ENCODE measurements at regions of chr16 and their contacts with region 1.

Region 1: GRCh38 chr16:66608241-66609138 is 4.0 kb downstream of the CMTM3 start:
- DNase-seq: peak; percentile 80
- H3K4me3 ChIP-seq: no peak overlapping the region
- H3K27ac ChIP-seq: no peak overlapping the region
- H3K4me1 ChIP-seq: peaks cover 29% of the 10 kb centered on the region
- H3K27me3 ChIP-seq: no peaks in the 10 kb centered on the region
- CTCF ChIP-seq: peak; percentile 85 to 98

Region 2: GRCh38 chr16:66650707-66651473 is 42.4 kb after region 1 on chr16:
- CTCF ChIA-PET with region 1: interaction called, 10 read pairs
- dilution Hi-C with region 1: no loop called
- in situ Hi-C with region 1: no loop called
- intact Hi-C with region 1: loop called (anchors 1 kb)
- DNase-seq: peak; percentile 86
- H3K4me3 ChIP-seq: peak overlapping the region in 1 of 3 experiments; percentile 18
- H3K27ac ChIP-seq: peak overlapping the region; percentile 59
- H3K4me1 ChIP-seq: peaks cover 24% of the 10 kb centered on the region
- H3K27me3 ChIP-seq: no peaks in the 10 kb centered on the region
- CTCF ChIP-seq: peak; percentile 93 to 99

Region 3: DNA sequence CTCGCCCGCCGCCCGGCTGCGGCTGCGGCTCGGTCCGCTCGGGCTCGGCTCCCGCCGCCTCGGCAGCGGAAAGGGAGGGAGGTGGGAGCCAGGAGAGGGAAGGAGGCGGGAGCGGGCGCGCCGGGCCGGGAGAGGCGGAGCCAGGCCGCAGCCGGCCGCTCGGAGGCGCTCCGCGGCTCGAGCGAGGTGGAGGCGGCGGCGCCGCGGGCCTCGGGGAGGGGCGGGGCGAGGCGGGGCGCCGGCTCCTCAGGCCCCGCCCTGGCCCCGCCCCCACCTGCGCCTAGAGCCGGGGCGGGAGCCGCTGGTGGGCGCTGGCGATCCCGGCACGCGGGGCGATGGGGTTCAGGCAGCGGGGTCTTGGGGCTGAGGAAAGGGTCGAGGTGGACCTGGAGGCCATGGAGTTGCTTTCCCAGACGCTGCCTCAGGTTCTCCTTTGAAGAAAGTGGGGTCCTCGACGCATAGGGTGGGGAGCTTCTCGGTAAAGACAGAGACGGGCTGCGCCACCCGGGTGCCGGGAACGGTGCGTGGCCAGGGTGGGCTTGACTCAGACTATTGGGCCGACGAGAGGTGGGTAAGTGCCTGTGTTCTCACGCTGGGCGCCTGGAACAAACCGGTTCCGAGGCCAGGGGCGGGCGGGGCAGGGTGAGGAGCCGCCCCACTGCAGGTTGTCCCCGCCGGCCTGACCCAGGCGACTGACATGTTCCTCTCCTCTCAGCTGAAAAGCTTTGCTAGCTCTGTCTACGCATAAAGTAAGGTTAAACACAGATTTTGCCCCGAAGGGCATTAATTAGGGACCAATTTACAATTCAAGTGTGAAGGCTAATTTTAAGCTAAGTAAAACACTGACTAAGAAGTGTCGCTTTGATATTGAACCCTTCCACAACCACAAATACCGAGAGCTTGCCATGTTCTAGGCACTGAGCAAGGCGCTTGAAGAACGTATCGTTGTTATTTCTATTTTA is 88.5 kb after region 1 on chr16 and contains the start of gene CMTM4:
- CTCF ChIA-PET with region 1: interaction called, 4 read pairs
- dilution Hi-C with region 1: no loop called
- in situ Hi-C with region 1: no loop called
- intact Hi-C with region 1: loop called (anchors 1 kb)
- DNase-seq: peak; percentile 88
- H3K4me3 ChIP-seq: peak within 1 kb of the TSS; percentile 79 to 98 (median 86)
- H3K27ac ChIP-seq: peak within 1 kb of the TSS; percentile 65
- H3K4me1 ChIP-seq: peaks cover 24% of the 10 kb centered on the region
- H3K27me3 ChIP-seq: no peaks in the 10 kb centered on the region
- CTCF ChIP-seq: peak; percentile 7 to 28
- total RNA-seq, gene CMTM4: 24.0 to 81.7 TPM

Region 4: DNA sequence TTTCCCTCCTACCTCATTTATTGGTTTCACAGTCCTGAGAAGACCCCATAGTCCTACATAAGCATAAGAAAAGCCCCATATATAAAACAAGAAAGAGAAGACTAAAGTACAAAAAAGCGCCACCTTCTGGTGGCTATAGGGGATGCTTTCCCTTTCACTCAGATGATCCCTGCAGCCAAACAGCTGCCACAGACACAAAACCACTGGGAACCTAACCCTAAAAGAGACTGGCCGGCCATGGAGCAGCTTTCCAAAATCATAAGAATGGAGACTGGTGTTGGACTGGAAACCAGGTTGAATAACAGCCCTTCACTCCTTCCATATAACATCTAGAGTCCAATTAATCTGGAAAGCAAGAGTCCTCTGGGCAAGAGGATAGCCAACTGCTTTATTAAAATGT is 131.5 kb after region 1 on chr16:
- CTCF ChIA-PET with region 1: no interaction called
- dilution Hi-C with region 1: no loop called
- in situ Hi-C with region 1: no loop called
- intact Hi-C with region 1: loop called (anchors 1 kb)
- DNase-seq: peak; percentile 23
- H3K4me3 ChIP-seq: no peak overlapping the region
- H3K27ac ChIP-seq: no peak overlapping the region
- H3K4me1 ChIP-seq: peaks cover 34% of the 10 kb centered on the region
- H3K27me3 ChIP-seq: no peaks in the 10 kb centered on the region
- CTCF ChIP-seq: peak; percentile 59 to 72

Region 5: DNA sequence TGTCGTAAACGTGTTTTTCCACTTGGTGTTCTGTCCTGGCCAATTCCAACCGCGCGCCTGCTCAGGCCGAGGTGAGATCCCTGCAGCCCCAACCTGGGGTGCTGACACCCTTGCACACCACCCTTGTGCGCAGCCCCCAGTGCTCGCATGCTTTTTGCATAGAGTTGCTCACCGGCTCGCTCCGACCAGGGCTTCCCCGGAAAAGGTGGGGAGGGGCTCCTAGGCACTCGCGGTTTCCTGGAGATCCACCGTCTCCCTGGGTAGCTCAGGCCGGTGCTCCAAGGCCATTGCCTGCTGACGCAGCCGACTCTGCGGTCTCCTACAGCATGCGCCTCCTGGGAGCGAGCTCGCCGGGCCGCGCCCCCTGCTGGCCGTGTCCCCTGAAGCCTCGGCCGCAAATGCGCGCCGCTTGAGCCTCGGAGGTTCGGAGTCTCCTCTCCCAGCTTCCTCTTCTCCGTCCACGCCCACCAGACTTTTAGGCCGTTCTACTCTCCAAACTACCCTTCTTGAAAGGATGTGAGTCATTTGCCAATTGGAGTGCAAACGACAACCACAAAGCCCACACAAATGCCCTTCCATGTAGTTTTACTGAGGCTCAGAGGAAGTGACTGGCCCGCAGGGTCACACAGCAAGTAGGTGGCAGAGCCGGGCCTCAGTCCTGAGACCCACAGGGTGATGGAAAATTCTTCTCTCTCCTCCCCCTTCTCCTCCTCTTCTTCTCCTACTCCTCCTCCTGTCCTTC is 264.6 kb after region 1 on chr16:
- CTCF ChIA-PET with region 1: interaction called, 16 read pairs
- dilution Hi-C with region 1: no loop called
- in situ Hi-C with region 1: loop called in 1 of 2 experiments (anchors 25 kb)
- intact Hi-C with region 1: loop called (anchors 1 kb)
- DNase-seq: peak; percentile 100
- H3K4me3 ChIP-seq: peak overlapping the region in 2 of 3 experiments; percentile 32 to 42
- H3K27ac ChIP-seq: no peak overlapping the region
- H3K4me1 ChIP-seq: peaks cover 14% of the 10 kb centered on the region
- H3K27me3 ChIP-seq: no peaks in the 10 kb centered on the region
- CTCF ChIP-seq: peak; percentile 87 to 95

Region 6: GRCh38 chr16:67170168-67170947 is 561.9 kb after region 1 on chr16 and contains the start of gene NOL3:
- CTCF ChIA-PET with region 1: no interaction called
- dilution Hi-C with region 1: no loop called
- in situ Hi-C with region 1: no loop called
- intact Hi-C with region 1: no loop called
- DNase-seq: peak; percentile 73
- H3K4me3 ChIP-seq: peak within 1 kb of the TSS; percentile 49 to 58 (median 54)
- H3K27ac ChIP-seq: peak within 1 kb of the TSS; percentile 70
- H3K4me1 ChIP-seq: peaks cover 47% of the 10 kb centered on the region
- H3K27me3 ChIP-seq: no peaks in the 10 kb centered on the region
- CTCF ChIP-seq: no peak
- total RNA-seq, gene NOL3: 30.0 to 41.9 TPM